Breast epithelium (tissue), 4 donors: ENCODE measurements at regions of chr15 and their contacts with region 1.

Region 1: DNA sequence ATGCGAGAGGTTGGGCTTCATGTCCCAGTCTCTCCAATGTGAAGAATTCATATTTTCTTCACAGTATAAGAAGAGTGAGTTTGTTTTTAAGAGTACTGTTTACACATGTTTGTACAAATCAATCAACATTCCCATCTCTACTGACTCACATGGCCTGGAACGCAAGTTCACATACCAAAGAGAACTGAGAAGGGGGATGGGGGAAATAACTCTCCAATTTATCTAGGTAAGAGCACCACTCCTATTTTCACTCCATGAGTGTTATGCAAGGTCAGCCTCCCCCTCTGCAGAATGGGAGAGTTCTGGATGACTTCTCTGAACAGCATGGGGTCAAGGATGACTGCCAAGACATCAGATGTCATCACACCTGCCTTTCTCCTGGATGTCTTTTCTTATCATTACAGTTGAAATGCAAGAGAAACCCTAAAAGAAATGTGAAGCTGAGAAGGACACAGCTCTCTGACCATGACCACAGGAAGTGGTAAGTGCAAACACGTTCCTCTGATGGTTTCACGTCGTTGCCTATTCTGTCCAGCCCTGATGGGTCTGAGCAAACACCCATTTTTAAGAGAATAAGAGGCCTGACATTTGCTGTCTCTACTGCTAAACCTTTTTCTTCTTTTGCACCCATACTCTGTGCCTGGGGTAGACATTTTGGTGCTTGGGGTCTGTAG is 95.3 kb downstream of the SEMA6D start:
- DNase-seq: no peak
- H3K4me3 ChIP-seq: no peak overlapping the region
- H3K27ac ChIP-seq: no peak overlapping the region
- H3K4me1 ChIP-seq: no peaks in the 10 kb centered on the region
- H3K27me3 ChIP-seq: no peaks in the 10 kb centered on the region
- CTCF ChIP-seq: no peak
- POLR2A ChIP-seq: no peak

Region 2: DNA sequence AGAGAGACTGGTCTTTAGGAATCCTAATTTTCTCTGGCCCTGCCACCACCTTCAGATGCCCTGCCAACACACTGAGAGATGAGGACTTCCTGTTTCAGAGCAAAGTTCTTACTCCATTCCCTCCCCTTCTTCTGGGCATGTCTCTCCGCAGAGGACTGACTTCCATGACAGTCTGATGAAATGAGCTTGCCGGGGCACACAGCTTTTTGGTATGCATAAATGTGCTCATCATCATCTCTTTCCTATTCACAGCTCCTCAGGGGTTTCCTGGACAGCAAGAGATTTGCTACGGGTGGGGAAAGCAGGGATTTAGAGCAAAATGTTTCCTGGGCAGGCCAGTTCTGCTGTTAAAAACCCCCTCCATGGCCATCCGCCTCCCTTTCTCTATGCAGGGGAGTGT is 122.9 kb before region 1 on chr15:
- intact Hi-C with region 1: loop called (anchors 5 kb)
- DNase-seq: no peak
- H3K4me3 ChIP-seq: no peak overlapping the region
- H3K27ac ChIP-seq: no peak overlapping the region
- H3K4me1 ChIP-seq: no peaks in the 10 kb centered on the region
- H3K27me3 ChIP-seq: no peaks in the 10 kb centered on the region
- CTCF ChIP-seq: no peak
- POLR2A ChIP-seq: no peak

Region 3: GRCh38 chr15:47824185-47824584 is 11.6 kb after region 1 on chr15:
- intact Hi-C with region 1: no loop called
- DNase-seq: no peak
- H3K4me3 ChIP-seq: no peak overlapping the region
- H3K27ac ChIP-seq: no peak overlapping the region
- H3K4me1 ChIP-seq: no peaks in the 10 kb centered on the region
- H3K27me3 ChIP-seq: peaks cover 0 to 3% of the 10 kb centered on the region in 2 donors
- CTCF ChIP-seq: no peak
- POLR2A ChIP-seq: no peak

Region 4: GRCh38 chr15:48001393-48002039 is 188.9 kb after region 1 on chr15:
- intact Hi-C with region 1: no loop called
- DNase-seq: no peak
- H3K4me3 ChIP-seq: no peak overlapping the region
- H3K27ac ChIP-seq: no peak overlapping the region
- H3K4me1 ChIP-seq: no peaks in the 10 kb centered on the region
- H3K27me3 ChIP-seq: no peaks in the 10 kb centered on the region
- CTCF ChIP-seq: no peak
- POLR2A ChIP-seq: no peak

Region 5: GRCh38 chr15:48617619-48618018 is 805.0 kb after region 1 on chr15:
- intact Hi-C with region 1: no loop called
- DNase-seq: no peak
- H3K4me3 ChIP-seq: no peak overlapping the region
- H3K27ac ChIP-seq: no peak overlapping the region
- H3K4me1 ChIP-seq: no peaks in the 10 kb centered on the region
- H3K27me3 ChIP-seq: no peaks in the 10 kb centered on the region
- CTCF ChIP-seq: no peak
- POLR2A ChIP-seq: no peak